Activated T-helper 1 cell treated with anti-CD3 and anti-CD28 coated beads, Interleukin-12 subunit alpha, Interleukin-12 subunit beta, Interleukin-2, Interleukin-4 antibody, amounts not matched to agents 30 ng/mL and 10 ng/mL and 1 ng/mL, durations not matched to agents 14 hours and 24 hours and 36 hours (primary cell): ENCODE measurements at regions of chr17 and their contacts with region 1.

Region 1: GRCh38 chr17:59753522-59754467 is 46.3 kb downstream of the VMP1 start:
- DNase-seq: peak; percentile 26
- H3K4me3 Mint-ChIP-seq: peak overlapping the region; percentile 80
- H3K27ac Mint-ChIP-seq: peak overlapping the region; percentile 93
- H3K4me1 Mint-ChIP-seq: peaks cover 64% of the 10 kb centered on the region
- H3K27me3 Mint-ChIP-seq: no peaks in the 10 kb centered on the region

Region 2: DNA sequence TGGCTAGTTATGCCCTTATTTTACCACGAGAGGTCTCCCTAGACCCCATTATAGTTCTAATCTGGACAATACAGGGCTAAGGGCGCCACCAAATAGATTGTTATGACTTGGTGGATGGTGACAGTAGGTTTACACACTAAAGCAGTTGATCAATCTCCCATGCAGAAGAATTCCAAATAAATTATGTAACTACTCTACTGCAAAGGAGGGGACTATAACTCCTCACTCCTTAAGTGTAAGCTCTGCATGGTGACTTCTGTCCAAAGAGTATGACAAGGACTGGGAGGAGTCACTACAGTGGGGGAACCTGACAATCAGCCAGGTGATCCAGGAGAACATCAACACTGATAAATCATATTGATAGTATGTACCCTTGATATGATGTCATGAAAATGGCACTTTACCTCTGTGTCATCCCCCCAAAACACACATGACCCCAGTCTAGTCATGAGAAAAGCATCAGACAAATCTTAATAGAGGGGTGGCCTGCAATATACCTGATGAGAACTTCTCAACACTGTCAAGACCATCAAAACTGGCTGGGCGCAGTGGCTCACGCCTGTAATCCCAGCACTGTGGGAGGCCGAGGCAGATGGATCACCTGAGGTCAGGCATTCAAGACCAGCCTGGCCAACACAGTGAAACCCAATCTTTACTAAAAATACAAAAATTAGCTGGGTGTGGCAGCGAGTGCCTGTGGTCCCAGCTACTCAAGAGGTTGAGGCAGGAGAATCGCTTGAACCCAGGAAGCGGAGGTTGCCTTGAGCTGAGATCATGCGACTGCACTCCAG is 442.5 kb before region 1 on chr17:
- intact Hi-C with region 1: loop called (anchors 5 kb)
- DNase-seq: peak; percentile 40
- H3K4me3 Mint-ChIP-seq: no peak overlapping the region
- H3K27ac Mint-ChIP-seq: no peak overlapping the region
- H3K4me1 Mint-ChIP-seq: peaks cover 8% of the 10 kb centered on the region
- H3K27me3 Mint-ChIP-seq: no peaks in the 10 kb centered on the region

Region 3: GRCh38 chr17:59837308-59838051 is 83.7 kb after region 1 on chr17:
- intact Hi-C with region 1: loop called (anchors 1 kb)
- DNase-seq: peak; percentile 81
- H3K4me3 Mint-ChIP-seq: peak overlapping the region; percentile 96
- H3K27ac Mint-ChIP-seq: peak overlapping the region; percentile 99
- H3K4me1 Mint-ChIP-seq: peaks cover 27% of the 10 kb centered on the region
- H3K27me3 Mint-ChIP-seq: peaks cover 2% of the 10 kb centered on the region

Region 4: DNA sequence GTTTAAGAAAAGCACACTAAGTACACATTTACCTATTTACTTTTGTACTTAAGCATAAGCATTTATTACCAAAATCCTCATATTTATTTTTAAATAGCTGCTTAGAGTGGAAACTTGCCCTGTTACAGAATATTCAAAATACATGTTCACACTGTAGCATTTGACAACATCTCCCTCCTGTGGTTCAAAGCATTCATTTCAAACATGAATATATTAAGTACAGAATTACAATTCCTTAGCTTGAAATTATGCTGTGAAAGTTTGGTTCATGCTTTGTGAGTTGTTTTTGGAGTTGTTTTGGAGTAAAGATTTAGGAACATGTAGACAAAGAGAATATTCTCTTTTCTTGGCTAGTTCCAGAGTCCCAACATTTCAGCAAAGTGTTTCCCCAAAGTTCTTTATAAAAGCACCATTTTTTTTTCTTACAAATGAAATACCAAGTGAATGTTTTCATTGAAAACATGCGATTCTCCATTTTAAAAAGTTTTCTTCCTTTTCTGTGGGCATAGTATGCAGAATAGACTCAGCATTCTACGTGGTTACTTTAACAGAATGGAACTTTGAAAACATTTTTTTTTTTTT is 105.7 kb after region 1 on chr17:
- intact Hi-C with region 1: loop called (anchors 1 kb)
- DNase-seq: no peak
- H3K4me3 Mint-ChIP-seq: no peak overlapping the region
- H3K27ac Mint-ChIP-seq: peak overlapping the region; percentile 67
- H3K4me1 Mint-ChIP-seq: peaks cover 28% of the 10 kb centered on the region
- H3K27me3 Mint-ChIP-seq: no peaks in the 10 kb centered on the region

Region 5: GRCh38 chr17:59941131-59941530 is 187.3 kb after region 1 on chr17:
- intact Hi-C with region 1: loop called (anchors 2 kb)
- DNase-seq: no peak
- H3K4me3 Mint-ChIP-seq: no peak overlapping the region
- H3K27ac Mint-ChIP-seq: peak overlapping the region; percentile 84
- H3K4me1 Mint-ChIP-seq: peaks cover 54% of the 10 kb centered on the region
- H3K27me3 Mint-ChIP-seq: no peaks in the 10 kb centered on the region